Activated B cell treated with CpG ODN at 0.5 μM for 24 hours (primary cell): ENCODE measurements at regions of chr10 and their contacts with region 1.

Region 1: GRCh38 chr10:60358282-60358681 is 31.4 kb downstream of the ANK3 start:
- DNase-seq: no peak
- ATAC-seq: peak; percentile 90
- H3K4me3 Mint-ChIP-seq: no peak overlapping the region
- H3K27ac Mint-ChIP-seq: no peak overlapping the region
- H3K4me1 Mint-ChIP-seq: peaks cover 9% of the 10 kb centered on the region
- H3K27me3 Mint-ChIP-seq: no peaks in the 10 kb centered on the region
- CTCF ChIP-seq: no peak

Region 2: GRCh38 chr10:59595593-59595992 is 762.7 kb before region 1 on chr10:
- CTCF ChIA-PET with region 1: no interaction called
- POLR2A ChIA-PET with region 1: no interaction called
- intact Hi-C with region 1: no loop called
- DNase-seq: no peak
- ATAC-seq: no peak
- H3K4me3 Mint-ChIP-seq: no peak overlapping the region
- H3K27ac Mint-ChIP-seq: no peak overlapping the region
- H3K4me1 Mint-ChIP-seq: no peaks in the 10 kb centered on the region
- H3K27me3 Mint-ChIP-seq: peaks cover 4% of the 10 kb centered on the region
- CTCF ChIP-seq: no peak

Region 3: DNA sequence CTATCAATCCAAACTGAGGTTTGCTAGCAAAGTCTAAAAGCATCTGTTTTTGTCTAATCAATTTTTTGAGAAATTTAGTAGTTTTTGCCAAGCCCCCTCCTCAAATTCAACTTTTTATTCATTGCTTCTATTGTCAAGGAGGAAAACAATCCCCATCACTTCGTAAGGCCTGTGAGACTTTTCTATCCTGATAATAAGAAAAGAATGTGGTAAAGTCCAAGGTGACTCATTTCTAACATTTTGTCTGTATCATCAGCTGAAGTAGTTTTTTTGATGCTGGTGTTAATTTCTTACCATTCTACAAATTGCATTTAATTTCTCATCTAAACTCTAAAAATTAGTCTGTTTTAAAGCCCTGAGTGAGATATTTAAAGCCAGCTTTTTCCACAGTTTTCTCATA is 19.7 kb after region 1 on chr10:
- CTCF ChIA-PET with region 1: no interaction called
- POLR2A ChIA-PET with region 1: no interaction called
- intact Hi-C with region 1: loop called (anchors 2 kb)
- DNase-seq: no peak
- ATAC-seq: no peak
- H3K4me3 Mint-ChIP-seq: no peak overlapping the region
- H3K27ac Mint-ChIP-seq: no peak overlapping the region
- H3K4me1 Mint-ChIP-seq: peaks cover 4% of the 10 kb centered on the region
- H3K27me3 Mint-ChIP-seq: no peaks in the 10 kb centered on the region
- CTCF ChIP-seq: no peak